Brain microvascular endothelial cell (primary cell): ENCODE measurements at regions of chr3 and their contacts with region 1.

Region 1: GRCh38 chr3:111717601-111718000 is 122.5 kb upstream of the ZBED2 start:
- DNase-seq: peak; percentile 88
- H3K4me3 ChIP-seq: no peak overlapping the region
- H3K27ac ChIP-seq: peak overlapping the region; percentile 24
- H3K27me3 ChIP-seq: no peaks in the 10 kb centered on the region
- CTCF ChIP-seq: peak; percentile 90

Region 2: GRCh38 chr3:111859974-111860859 is 142.6 kb after region 1 on chr3:
- in situ Hi-C with region 1: loop called (anchors 10 kb)
- DNase-seq: peak; percentile 88
- H3K4me3 ChIP-seq: peak overlapping the region; percentile 73
- H3K27ac ChIP-seq: peak overlapping the region; percentile 99
- H3K27me3 ChIP-seq: no peaks in the 10 kb centered on the region
- CTCF ChIP-seq: peak; percentile 73